A673 (cell line): ENCODE measurements at regions of chrX and their contacts with region 1.

Region 1: GRCh38 chrX:136028251-136028984 is 43.2 kb downstream of the SLC9A6 start:
- DNase-seq: peak; percentile 68
- H3K4me3 ChIP-seq: no peak overlapping the region
- H3K27ac ChIP-seq: no peak overlapping the region
- H3K4me1 ChIP-seq: no peaks in the 10 kb centered on the region
- H3K27me3 ChIP-seq: no peaks in the 10 kb centered on the region
- CTCF ChIP-seq: peak; percentile 70

Region 2: DNA sequence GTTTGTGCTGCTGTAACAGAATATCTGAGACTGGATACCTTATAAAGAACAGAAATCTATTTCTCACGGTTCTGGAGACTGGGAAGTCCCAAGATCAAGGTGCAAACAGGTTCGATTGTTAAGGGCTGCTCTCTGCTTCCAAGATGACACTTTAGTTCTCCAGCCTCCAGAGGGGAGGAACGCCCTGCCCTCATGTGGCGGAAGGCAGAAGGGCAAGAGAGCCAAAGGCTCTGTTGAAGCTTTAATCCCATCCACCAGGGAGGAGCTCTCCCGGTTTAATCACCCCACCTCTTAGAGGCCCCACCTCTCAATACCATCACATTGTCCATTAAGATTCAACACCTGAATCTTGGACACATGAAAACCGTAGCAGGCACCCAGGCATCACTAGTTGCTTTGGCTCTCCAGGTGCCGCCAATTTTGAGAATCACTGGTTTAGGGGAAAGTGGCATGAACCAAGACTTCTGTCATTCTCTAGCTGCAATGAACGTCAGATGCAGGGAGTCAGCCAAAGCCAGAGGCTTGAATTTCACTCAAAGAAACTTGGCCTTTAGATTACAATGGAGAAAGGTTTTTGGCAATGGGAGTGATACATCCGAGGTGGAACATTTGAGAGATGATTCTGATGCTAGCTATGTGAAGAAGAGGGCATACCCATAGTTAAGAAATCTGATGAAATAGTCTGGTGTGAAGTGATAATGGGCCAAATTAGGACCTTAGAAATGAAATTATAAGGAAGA is 134.6 kb after region 1 on chrX:
- CTCF ChIA-PET with region 1: interaction called, 33 read pairs
- POLR2A ChIA-PET with region 1: no interaction called
- intact Hi-C with region 1: loop called (anchors 1 kb)
- DNase-seq: peak; percentile 66
- H3K4me3 ChIP-seq: no peak overlapping the region
- H3K27ac ChIP-seq: no peak overlapping the region
- H3K4me1 ChIP-seq: no peaks in the 10 kb centered on the region
- H3K27me3 ChIP-seq: no peaks in the 10 kb centered on the region
- CTCF ChIP-seq: peak; percentile 73

Region 3: GRCh38 chrX:136200466-136200865 is 172.0 kb after region 1 on chrX:
- CTCF ChIA-PET with region 1: no interaction called
- POLR2A ChIA-PET with region 1: no interaction called
- intact Hi-C with region 1: loop called (anchors 5 kb)
- DNase-seq: peak; percentile 57
- H3K4me3 ChIP-seq: no peak overlapping the region
- H3K27ac ChIP-seq: no peak overlapping the region
- H3K4me1 ChIP-seq: peaks cover 9% of the 10 kb centered on the region
- H3K27me3 ChIP-seq: peaks cover 9% of the 10 kb centered on the region
- CTCF ChIP-seq: peak; percentile 63

Region 4: GRCh38 chrX:136209016-136209738 is 180.8 kb after region 1 on chrX:
- CTCF ChIA-PET with region 1: interaction called, 21 read pairs
- POLR2A ChIA-PET with region 1: no interaction called
- intact Hi-C with region 1: loop called (anchors 5 kb)
- DNase-seq: peak; percentile 49
- H3K4me3 ChIP-seq: no peak overlapping the region
- H3K27ac ChIP-seq: no peak overlapping the region
- H3K4me1 ChIP-seq: peaks cover 5% of the 10 kb centered on the region
- H3K27me3 ChIP-seq: no peaks in the 10 kb centered on the region
- CTCF ChIP-seq: peak; percentile 62

Region 5: DNA sequence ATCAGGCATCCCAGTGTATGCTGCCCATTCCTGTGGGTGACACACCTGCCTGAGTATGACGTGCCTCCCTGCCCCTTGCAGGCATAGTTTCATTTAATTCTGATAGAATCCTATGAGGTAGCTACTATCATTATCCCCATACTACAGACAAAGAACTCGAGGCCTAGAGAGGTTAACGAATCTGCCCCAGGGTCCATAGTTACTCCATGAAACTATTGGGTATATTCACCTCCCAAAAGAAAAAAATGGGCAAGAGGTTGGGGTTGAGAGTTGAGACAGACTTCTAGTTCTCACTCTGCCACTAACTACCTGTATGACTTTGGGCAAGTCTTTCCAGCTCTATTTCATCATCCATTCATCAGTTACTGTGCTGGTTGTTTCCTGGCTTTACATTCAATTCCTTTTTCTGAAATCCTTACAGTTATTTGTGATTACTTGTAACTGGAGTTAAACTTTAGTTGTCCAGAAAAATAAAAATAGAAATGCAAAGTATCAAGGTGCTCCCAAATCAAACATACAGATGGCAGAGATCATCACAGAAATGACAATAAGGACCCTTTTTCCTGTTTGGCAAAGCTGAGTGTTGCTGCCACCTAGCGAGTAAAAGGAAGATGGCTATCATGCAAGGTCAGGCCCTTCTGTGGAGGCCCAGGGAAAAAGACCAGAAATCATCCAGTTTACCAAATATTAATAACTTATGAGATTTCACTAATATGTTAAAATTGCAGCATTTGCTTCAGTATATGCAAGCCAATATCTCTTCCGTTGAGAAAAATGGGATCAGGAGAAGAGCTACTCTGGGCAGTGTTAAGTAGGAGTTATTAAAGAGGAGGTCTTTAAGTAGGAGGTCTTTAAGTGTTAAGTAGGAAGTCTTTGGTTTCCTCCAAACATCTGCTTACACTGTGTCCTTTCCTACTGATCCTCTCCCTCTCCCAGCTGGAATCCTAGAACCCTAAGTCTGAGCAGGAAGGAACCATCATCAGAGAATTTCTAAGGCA is 239.9 kb after region 1 on chrX:
- CTCF ChIA-PET with region 1: interaction called, 9 read pairs
- POLR2A ChIA-PET with region 1: no interaction called
- intact Hi-C with region 1: loop called (anchors 1 kb)
- DNase-seq: peak; percentile 58
- H3K4me3 ChIP-seq: no peak overlapping the region
- H3K27ac ChIP-seq: no peak overlapping the region
- H3K4me1 ChIP-seq: no peaks in the 10 kb centered on the region
- H3K27me3 ChIP-seq: no peaks in the 10 kb centered on the region
- CTCF ChIP-seq: peak; percentile 87

Region 6: GRCh38 chrX:136577552-136577951 is 549.1 kb after region 1 on chrX:
- CTCF ChIA-PET with region 1: interaction called, 6 read pairs
- POLR2A ChIA-PET with region 1: no interaction called
- intact Hi-C with region 1: loop called (anchors 2 kb)
- DNase-seq: peak; percentile 61
- H3K4me3 ChIP-seq: no peak overlapping the region
- H3K27ac ChIP-seq: no peak overlapping the region
- H3K4me1 ChIP-seq: no peaks in the 10 kb centered on the region
- H3K27me3 ChIP-seq: no peaks in the 10 kb centered on the region
- CTCF ChIP-seq: peak; percentile 78

Region 7: DNA sequence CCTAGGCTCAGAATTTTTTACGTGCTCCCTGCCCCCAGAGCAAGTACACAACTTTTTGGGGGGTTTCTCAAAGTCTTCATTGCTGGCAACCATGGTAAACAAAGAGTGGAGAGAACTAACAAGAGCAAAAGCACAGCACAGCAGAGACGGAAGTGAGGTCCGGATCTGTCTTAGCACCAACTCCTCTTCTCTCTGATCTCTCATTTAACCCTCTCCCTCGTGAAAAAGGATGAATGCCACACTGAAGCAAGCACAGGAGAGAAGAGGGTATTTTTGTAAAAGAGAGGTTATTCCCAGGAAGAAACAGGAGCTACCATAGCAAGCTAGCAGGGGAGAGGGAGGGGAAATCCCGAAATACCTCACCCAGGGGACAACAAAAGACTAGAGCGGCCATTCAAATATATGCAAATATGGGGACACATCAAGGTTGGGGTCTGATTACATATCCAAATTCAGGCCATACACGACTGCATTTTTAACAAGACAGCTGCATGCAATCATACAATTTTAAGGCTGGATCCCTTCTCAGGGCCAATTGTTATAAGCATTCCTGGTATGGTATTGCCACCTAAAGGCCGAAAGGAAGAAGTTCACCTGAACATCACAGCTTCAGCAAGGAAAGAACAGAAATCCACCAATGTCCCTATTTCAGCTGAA is 666.1 kb after region 1 on chrX:
- CTCF ChIA-PET with region 1: interaction called, 5 read pairs
- POLR2A ChIA-PET with region 1: no interaction called
- intact Hi-C with region 1: loop called (anchors 10 kb)
- DNase-seq: peak; percentile 74
- H3K4me3 ChIP-seq: no peak overlapping the region
- H3K27ac ChIP-seq: peak overlapping the region; percentile 10
- H3K4me1 ChIP-seq: no peaks in the 10 kb centered on the region
- H3K27me3 ChIP-seq: no peaks in the 10 kb centered on the region
- CTCF ChIP-seq: peak; percentile 78